A549 (cell line): ENCODE measurements at regions of chr22 and their contacts with region 1.

Region 1: GRCh38 chr22:37643225-37643847 is 3.9 kb downstream of the SH3BP1 start:
- DNase-seq: peak; percentile 59 to 78
- ATAC-seq: peak; percentile 79 to 92
- H3K4me3 ChIP-seq: no peak overlapping the region
- H3K27ac ChIP-seq: 0 out of 6 replicates have a peak overlapping the region, but pooled peaks of 1 of the 2 experiments have one; percentile 26
- H3K4me1 ChIP-seq: peaks cover 10% of the 10 kb centered on the region; the same call in 2 of the 3 replicates
- CTCF ChIP-seq: peak; percentile 67
- EP300 ChIP-seq: no peak
- POLR2A ChIP-seq: no peak
- RAD21 ChIP-seq: peak; percentile 65 to 66

Region 2: GRCh38 chr22:37454857-37455686 is 188.3 kb before region 1 on chr22:
- CTCF ChIA-PET with region 1: no interaction called
- POLR2A ChIA-PET with region 1: no interaction called
- DNase-seq: peak; percentile 55 to 83
- ATAC-seq: peak; percentile 70 to 79
- H3K4me3 ChIP-seq: peak overlapping the region; percentile 31; the same call in 2 of the 3 replicates
- H3K27ac ChIP-seq: peak overlapping the region; percentile 91 to 99
- H3K4me1 ChIP-seq: peaks cover 33% of the 10 kb centered on the region
- CTCF ChIP-seq: no peak
- EP300 ChIP-seq: peak in 1 of 2 experiments; percentile 19; a peak in 2 of 5 replicates
- POLR2A ChIP-seq: no peak
- RAD21 ChIP-seq: 0 out of 5 replicates have a peak, but pooled peaks of 1 of the 2 experiments have one; percentile 17

Region 3: DNA sequence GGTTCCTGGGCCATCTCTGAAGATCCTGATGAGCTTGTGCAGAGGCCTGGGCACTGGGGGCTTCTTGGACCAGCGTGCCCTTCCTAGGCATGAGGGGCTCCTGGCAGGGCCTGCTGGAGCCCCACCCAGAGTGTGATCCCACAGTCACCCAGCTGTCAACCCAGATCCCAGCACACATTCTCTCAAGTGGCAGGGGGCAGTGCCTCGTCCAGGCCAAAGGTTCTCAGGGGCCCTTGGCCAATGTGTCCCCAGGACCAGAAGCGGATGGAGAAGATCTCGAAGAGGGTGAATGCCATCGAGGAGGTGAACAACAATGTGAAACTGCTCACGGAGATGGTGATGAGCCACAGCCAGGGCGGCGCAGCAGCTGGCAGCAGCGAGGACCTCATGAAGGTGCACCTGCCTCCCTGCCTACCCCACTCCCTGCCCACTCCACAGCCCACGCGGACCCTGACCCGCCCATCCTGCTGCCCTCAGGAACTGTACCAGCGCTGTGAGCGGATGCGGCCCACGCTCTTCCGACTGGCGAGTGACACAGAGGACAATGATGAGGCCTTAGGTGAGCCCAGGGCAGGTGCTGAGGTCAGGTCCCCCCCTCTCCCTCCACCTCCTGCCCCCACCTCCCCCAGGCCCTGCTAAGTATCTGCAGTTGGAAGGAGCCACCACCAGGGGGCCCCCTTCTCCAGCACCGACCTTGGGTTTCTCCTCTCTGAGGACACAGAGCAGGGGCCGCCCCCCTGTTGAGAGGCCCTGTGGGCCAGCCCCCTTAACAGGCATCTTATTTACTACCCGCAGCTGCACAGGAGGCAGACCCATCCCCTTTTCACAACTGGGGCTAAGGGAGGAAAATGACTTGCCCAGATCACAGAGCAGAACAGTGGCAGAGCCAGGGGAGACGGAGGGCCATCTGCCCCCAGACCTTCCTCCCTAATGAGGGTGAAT is 20.0 kb before region 1 on chr22:
- CTCF ChIA-PET with region 1: interaction called, 129 read pairs
- POLR2A ChIA-PET with region 1: no interaction called
- DNase-seq: peak; percentile 32 to 57
- ATAC-seq: peak; percentile 77 to 89
- H3K4me3 ChIP-seq: no peak overlapping the region
- H3K27ac ChIP-seq: no peak overlapping the region
- H3K4me1 ChIP-seq: no peaks in the 10 kb centered on the region
- CTCF ChIP-seq: peak; percentile 70
- EP300 ChIP-seq: no peak
- POLR2A ChIP-seq: no peak
- RAD21 ChIP-seq: peak; percentile 45 to 58

Region 4: GRCh38 chr22:37664249-37665101 is 21.1 kb after region 1 on chr22:
- CTCF ChIA-PET with region 1: interaction called, 152 read pairs
- POLR2A ChIA-PET with region 1: no interaction called
- DNase-seq: no peak
- ATAC-seq: no peak
- H3K4me3 ChIP-seq: no peak overlapping the region
- H3K27ac ChIP-seq: no peak overlapping the region
- H3K4me1 ChIP-seq: peaks cover 9% of the 10 kb centered on the region; the same call in 2 of the 3 replicates
- CTCF ChIP-seq: no peak
- EP300 ChIP-seq: no peak
- POLR2A ChIP-seq: no peak
- RAD21 ChIP-seq: no peak

Region 5: GRCh38 chr22:37686002-37686982 is 43.0 kb after region 1 on chr22 and contains the start of gene NOL12:
- CTCF ChIA-PET with region 1: interaction called, 152 read pairs
- POLR2A ChIA-PET with region 1: interaction called, 9 read pairs
- DNase-seq: peak; percentile 62 to 90
- ATAC-seq: peak; percentile 91 to 95
- H3K4me3 ChIP-seq: peak within 1 kb of the TSS; percentile 96
- H3K27ac ChIP-seq: peak within 1 kb of the TSS; percentile 98 to 99
- H3K4me1 ChIP-seq: peaks cover 16% of the 10 kb centered on the region
- CTCF ChIP-seq: no peak
- EP300 ChIP-seq: no peak
- POLR2A ChIP-seq: no peak; the same call in none of the 2 replicates
- RAD21 ChIP-seq: no peak
- polyA plus RNA-seq, gene NOL12: 13.6 and 23.0 TPM in 2 replicates

Region 6: DNA sequence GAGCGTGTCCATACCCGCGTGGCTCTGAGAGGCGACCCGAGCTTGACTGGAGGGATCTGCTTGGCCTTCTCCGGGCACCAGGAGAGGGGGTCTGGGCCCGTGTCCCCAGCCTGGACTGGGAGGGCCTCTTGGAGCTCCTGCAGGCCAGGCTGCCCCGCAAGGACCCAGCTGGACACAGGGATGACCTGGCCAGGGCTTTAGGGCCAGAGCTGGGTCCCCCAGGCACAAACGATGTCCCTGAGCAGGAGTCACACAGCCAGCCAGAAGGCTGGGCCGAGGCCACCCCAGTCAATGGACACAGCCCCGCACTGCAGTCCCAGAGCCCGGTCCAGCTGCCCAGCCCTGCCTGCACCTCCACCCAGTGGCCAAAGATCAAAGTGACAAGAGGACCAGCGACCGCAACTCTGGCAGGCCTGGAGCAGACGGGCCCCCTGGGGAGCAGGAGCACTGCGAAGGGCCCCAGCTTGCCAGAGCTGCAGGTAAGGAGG is 91.7 kb after region 1 on chr22:
- CTCF ChIA-PET with region 1: interaction called, 18 read pairs
- POLR2A ChIA-PET with region 1: no interaction called
- DNase-seq: peak; percentile 67 to 72
- ATAC-seq: peak; percentile 88 to 92
- H3K4me3 ChIP-seq: no peak overlapping the region
- H3K27ac ChIP-seq: peak overlapping the region; percentile 48 to 74; a peak in 3 of 6 replicates
- H3K4me1 ChIP-seq: peaks cover 24% of the 10 kb centered on the region
- CTCF ChIP-seq: peak; percentile 27; the same call in 1 of the 3 replicates
- EP300 ChIP-seq: no peak
- POLR2A ChIP-seq: no peak
- RAD21 ChIP-seq: peak; percentile 45 to 54; a peak in 3 of 5 replicates

Region 7: GRCh38 chr22:37781479-37781911 is 138.2 kb after region 1 on chr22:
- CTCF ChIA-PET with region 1: interaction called, 12 read pairs
- POLR2A ChIA-PET with region 1: no interaction called
- DNase-seq: peak in 1 of 2 experiments; percentile 47
- ATAC-seq: peak; percentile 66 to 77; a peak in 5 of 6 replicates
- H3K4me3 ChIP-seq: no peak overlapping the region
- H3K27ac ChIP-seq: peak overlapping the region in 1 of 2 experiments; percentile 65; a peak in 3 of 6 replicates
- H3K4me1 ChIP-seq: peaks cover 22% of the 10 kb centered on the region
- CTCF ChIP-seq: peak; percentile 7; the same call in 1 of the 3 replicates
- EP300 ChIP-seq: no peak
- POLR2A ChIP-seq: no peak
- RAD21 ChIP-seq: peak; percentile 17 to 33; a peak in 2 of 5 replicates